Endothelial cell of umbilical vein (primary cell): ENCODE measurements at regions of chr6 and their contacts with region 1.

Region 1: DNA sequence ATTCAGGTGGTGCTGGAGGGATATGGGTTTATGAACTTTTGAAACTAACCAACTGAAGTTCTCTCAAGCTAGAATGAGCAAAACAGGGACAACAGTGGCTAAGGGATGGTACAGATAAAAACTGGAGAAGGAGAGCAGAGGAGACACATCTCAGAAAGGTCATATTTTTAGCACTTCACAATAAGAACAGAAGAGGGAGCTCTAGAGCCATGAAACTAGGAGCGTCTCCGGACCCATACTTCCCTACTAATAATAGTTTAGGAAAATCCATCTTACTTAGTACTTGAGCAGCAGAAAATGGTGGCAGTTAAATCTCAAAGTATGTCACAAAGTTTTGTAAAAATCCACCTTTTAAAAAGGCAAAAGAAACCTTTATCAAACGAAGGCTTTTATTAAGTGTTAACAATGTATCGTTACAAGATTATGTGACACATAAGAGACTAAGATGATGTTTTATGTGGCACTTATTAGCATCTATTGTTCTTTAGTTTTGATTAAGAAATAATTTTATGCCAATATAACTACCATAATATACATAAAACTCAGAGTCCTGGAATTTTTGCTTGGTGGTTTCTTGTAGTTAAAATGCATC is 278.6 kb downstream of the TBC1D32 start:
- DNase-seq: peak; percentile 58
- H3K4me3 ChIP-seq: no peak overlapping the region
- H3K27ac ChIP-seq: no peak overlapping the region
- H3K4me1 ChIP-seq: no peaks in the 10 kb centered on the region
- H3K27me3 ChIP-seq: no peaks in the 10 kb centered on the region
- CTCF ChIP-seq: peak; percentile 46 to 64
- POLR2A ChIP-seq: no peak

Region 2: GRCh38 chr6:119147101-119148053 is 1908.3 kb before region 1 on chr6:
- CTCF ChIA-PET with region 1: interaction called, 9 read pairs
- POLR2A ChIA-PET with region 1: no interaction called
- dilution Hi-C with region 1: no loop called
- intact Hi-C with region 1: loop called (anchors 2 kb)
- DNase-seq: peak; percentile 77
- H3K4me3 ChIP-seq: no peak overlapping the region
- H3K27ac ChIP-seq: peak overlapping the region; percentile 86
- H3K4me1 ChIP-seq: peaks cover 29% of the 10 kb centered on the region
- H3K27me3 ChIP-seq: no peaks in the 10 kb centered on the region
- CTCF ChIP-seq: no peak
- POLR2A ChIP-seq: no peak

Region 3: DNA sequence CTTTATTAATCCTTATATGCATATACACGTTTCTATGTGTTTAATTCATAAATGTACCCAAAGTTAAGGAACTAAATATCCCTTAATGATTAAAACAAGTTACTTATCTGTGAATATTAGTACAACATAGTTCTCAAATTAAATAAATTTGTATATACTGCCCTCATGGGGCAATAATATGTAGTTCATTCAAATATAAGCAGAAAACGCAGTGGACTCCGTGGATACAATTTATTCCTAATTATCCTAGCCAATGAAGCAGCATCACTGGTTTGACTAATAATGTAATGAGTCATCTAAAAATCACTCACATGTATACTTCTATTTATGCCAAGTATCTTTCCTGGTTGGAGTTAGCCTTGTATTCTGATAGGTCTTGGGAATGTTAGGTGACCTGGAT is 167.0 kb after region 1 on chr6:
- CTCF ChIA-PET with region 1: interaction called, 4 read pairs
- POLR2A ChIA-PET with region 1: no interaction called
- dilution Hi-C with region 1: no loop called
- intact Hi-C with region 1: loop called (anchors 1 kb)
- DNase-seq: peak; percentile 21
- H3K4me3 ChIP-seq: no peak overlapping the region
- H3K27ac ChIP-seq: no peak overlapping the region
- H3K4me1 ChIP-seq: no peaks in the 10 kb centered on the region
- H3K27me3 ChIP-seq: no peaks in the 10 kb centered on the region
- CTCF ChIP-seq: no peak
- POLR2A ChIP-seq: no peak

Region 4: GRCh38 chr6:121399966-121400365 is 344.3 kb after region 1 on chr6:
- CTCF ChIA-PET with region 1: interaction called, 14 read pairs
- POLR2A ChIA-PET with region 1: no interaction called
- dilution Hi-C with region 1: no loop called
- intact Hi-C with region 1: loop called (anchors 2 kb)
- DNase-seq: no peak
- H3K4me3 ChIP-seq: no peak overlapping the region
- H3K27ac ChIP-seq: no peak overlapping the region
- H3K4me1 ChIP-seq: no peaks in the 10 kb centered on the region
- H3K27me3 ChIP-seq: no peaks in the 10 kb centered on the region
- CTCF ChIP-seq: no peak
- POLR2A ChIP-seq: no peak

Region 5: GRCh38 chr6:122184401-122184827 is 1128.7 kb after region 1 on chr6:
- CTCF ChIA-PET with region 1: interaction called, 17 read pairs
- POLR2A ChIA-PET with region 1: no interaction called
- dilution Hi-C with region 1: no loop called
- intact Hi-C with region 1: loop called (anchors 1 kb)
- DNase-seq: peak; percentile 32
- H3K4me3 ChIP-seq: no peak overlapping the region
- H3K27ac ChIP-seq: no peak overlapping the region
- H3K4me1 ChIP-seq: no peaks in the 10 kb centered on the region
- H3K27me3 ChIP-seq: no peaks in the 10 kb centered on the region
- CTCF ChIP-seq: peak in 1 of 2 donors; percentile 15
- POLR2A ChIP-seq: no peak